CD8-positive, alpha-beta T cell (primary cell): ENCODE measurements at regions of chr9 and their contacts with region 1.

Region 1: GRCh38 chr9:96854073-96854876 is at the start of gene ZNF782:
- DNase-seq: peak; percentile 62 to 93 (median 83)
- ATAC-seq: peak; percentile 79
- H3K4me3 ChIP-seq: peak within 1 kb of the TSS; percentile 91 to 97
- H3K4me3 Mint-ChIP-seq: peak within 1 kb of the TSS; percentile 100
- H3K27ac ChIP-seq: peak within 1 kb of the TSS; percentile 52 to 74
- H3K27ac Mint-ChIP-seq: peak within 1 kb of the TSS; percentile 99
- H3K4me1 ChIP-seq: peaks cover 29% of the 10 kb centered on the region
- H3K4me1 Mint-ChIP-seq: peaks cover 52% of the 10 kb centered on the region
- H3K27me3 ChIP-seq: no peaks in the 10 kb centered on the region
- H3K27me3 Mint-ChIP-seq: peaks cover 4% of the 10 kb centered on the region
- CTCF ChIP-seq: no peak
- total RNA-seq, gene ZNF782: 2.6 to 3.6 TPM

Region 2: GRCh38 chr9:96566498-96567207 is 287.6 kb before region 1 on chr9:
- CTCF ChIA-PET with region 1: no interaction called
- POLR2A ChIA-PET with region 1: no interaction called
- intact Hi-C with region 1: loop called in 1 of 2 experiments (anchors 10 kb)
- DNase-seq: peak; percentile 57 to 92 (median 82)
- ATAC-seq: peak; percentile 86
- H3K4me3 ChIP-seq: peak overlapping the region; percentile 76 to 88
- H3K4me3 Mint-ChIP-seq: peak overlapping the region; percentile 86
- H3K27ac ChIP-seq: peak overlapping the region; percentile 87 to 91
- H3K27ac Mint-ChIP-seq: peak overlapping the region; percentile 84
- H3K4me1 ChIP-seq: peaks cover 24% of the 10 kb centered on the region
- H3K4me1 Mint-ChIP-seq: peaks cover 27% of the 10 kb centered on the region
- H3K27me3 ChIP-seq: no peaks in the 10 kb centered on the region
- H3K27me3 Mint-ChIP-seq: peaks cover 12% of the 10 kb centered on the region
- CTCF ChIP-seq: peak; percentile 58

Region 3: GRCh38 chr9:96844040-96844439 is 10.2 kb before region 1 on chr9:
- CTCF ChIA-PET with region 1: interaction called, 13 read pairs
- POLR2A ChIA-PET with region 1: interaction called, 3 read pairs
- intact Hi-C with region 1: no loop called
- DNase-seq: no peak
- ATAC-seq: no peak
- H3K4me3 ChIP-seq: no peak overlapping the region
- H3K4me3 Mint-ChIP-seq: no peak overlapping the region
- H3K27ac ChIP-seq: no peak overlapping the region
- H3K27ac Mint-ChIP-seq: no peak overlapping the region
- H3K4me1 ChIP-seq: peaks cover 4% of the 10 kb centered on the region
- H3K4me1 Mint-ChIP-seq: peaks cover 33% of the 10 kb centered on the region
- H3K27me3 ChIP-seq: no peaks in the 10 kb centered on the region
- H3K27me3 Mint-ChIP-seq: no peaks in the 10 kb centered on the region
- CTCF ChIP-seq: no peak

Region 4: DNA sequence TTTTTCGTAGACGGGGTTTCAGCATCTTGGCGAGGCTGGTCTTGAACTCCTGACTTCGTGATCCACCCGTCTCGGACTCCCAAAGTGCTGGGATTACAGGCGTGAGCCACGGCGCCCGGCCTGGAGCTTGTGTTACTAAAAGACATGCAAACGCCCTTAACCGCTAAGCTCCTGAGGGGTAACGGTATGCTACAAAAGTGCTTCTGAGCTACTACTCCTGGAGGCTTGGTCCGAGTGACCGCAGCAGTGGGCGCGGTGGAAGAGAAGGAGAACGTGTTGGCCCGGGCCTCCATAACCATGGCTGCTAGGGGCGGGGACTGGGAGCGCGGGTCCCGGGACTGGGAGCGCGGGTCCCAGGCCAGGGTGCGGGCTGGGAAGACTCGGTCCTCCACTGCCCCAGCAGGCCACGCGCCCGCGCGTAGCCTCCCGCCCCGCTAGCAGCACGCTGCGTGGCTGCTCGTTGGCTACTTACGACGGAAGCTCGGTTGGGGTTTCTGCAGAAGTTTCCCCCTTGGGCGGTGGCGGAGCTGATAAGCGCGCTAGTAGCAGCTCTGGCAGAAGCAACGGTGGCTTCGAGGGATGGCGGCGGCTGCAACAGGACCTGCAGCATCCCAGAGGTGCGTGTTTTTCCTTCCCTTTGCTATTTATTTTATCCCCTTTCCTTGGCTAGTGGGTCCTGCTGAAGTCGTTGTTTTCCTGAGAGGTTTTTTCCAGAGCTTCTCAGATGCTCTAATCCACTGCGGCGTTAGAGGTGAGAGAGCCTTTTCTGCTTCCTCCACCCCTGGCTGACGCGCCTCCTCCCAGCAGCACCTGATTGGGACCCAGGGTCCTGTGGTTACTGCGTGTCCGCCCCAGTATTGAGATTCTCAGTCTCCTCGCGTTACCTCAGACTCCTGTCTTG is 383.9 kb after region 1 on chr9:
- CTCF ChIA-PET with region 1: no interaction called
- POLR2A ChIA-PET with region 1: interaction called, 4 read pairs
- intact Hi-C with region 1: loop called (anchors 2 kb)
- DNase-seq: peak; percentile 48 to 89 (median 77)
- ATAC-seq: peak; percentile 91
- H3K4me3 ChIP-seq: peak overlapping the region; percentile 59 to 89
- H3K4me3 Mint-ChIP-seq: peak overlapping the region; percentile 93
- H3K27ac ChIP-seq: peak overlapping the region; percentile 45 to 51
- H3K27ac Mint-ChIP-seq: peak overlapping the region; percentile 95
- H3K4me1 ChIP-seq: peaks cover 14% of the 10 kb centered on the region
- H3K4me1 Mint-ChIP-seq: peaks cover 32% of the 10 kb centered on the region
- H3K27me3 ChIP-seq: no peaks in the 10 kb centered on the region
- H3K27me3 Mint-ChIP-seq: no peaks in the 10 kb centered on the region
- CTCF ChIP-seq: no peak

Region 5: DNA sequence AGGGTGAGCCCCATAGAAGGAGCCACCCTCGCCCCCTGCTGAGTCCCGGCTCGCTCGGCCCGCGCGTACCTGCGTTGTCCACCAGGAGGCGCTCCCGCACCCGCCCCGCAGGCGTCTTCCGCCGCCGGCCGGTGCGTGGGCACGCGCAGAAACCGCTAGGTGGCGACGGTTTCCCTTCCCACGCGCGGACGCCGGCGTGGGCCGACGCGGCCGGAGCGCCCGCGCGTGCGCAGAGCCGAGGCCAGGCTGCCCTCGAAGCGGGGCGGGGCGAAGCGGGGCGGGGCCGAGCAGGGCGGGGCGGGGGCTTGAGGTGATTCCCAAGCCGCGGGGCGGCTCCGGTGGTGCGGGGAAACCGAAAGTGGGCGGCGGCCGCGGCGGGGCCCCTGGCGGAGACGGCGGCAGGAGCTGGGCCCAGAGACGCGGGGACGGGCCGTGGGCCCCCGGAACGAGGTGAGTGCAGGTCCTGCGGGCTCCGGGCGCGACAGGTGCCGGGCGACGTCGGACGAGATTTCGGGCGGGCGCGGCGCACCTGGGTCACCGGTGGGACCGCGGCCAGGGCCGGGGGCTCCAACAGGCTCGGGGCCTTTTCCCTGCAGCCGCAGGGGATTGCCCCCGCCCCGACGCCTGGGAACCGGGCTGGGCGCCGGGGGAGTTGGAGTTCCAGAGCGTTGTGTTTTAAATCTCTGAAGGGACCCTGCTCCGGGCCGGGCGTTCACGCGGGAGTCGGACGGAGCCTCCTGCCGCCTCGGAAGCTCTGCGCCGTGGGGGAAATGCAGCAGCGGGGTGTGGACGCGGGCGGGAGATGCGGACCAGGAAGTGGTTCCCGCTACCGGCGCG is 557.7 kb after region 1 on chr9 and contains the start of gene TDRD7:
- CTCF ChIA-PET with region 1: interaction called, 6 read pairs
- POLR2A ChIA-PET with region 1: no interaction called
- intact Hi-C with region 1: loop called in 1 of 2 experiments (anchors 1 kb)
- DNase-seq: peak; percentile 86 to 97 (median 92)
- ATAC-seq: peak; percentile 88
- H3K4me3 ChIP-seq: peak within 1 kb of the TSS; percentile 62 to 77
- H3K4me3 Mint-ChIP-seq: peak within 1 kb of the TSS; percentile 86
- H3K27ac ChIP-seq: peak within 1 kb of the TSS; percentile 56 to 79
- H3K27ac Mint-ChIP-seq: peak within 1 kb of the TSS; percentile 85
- H3K4me1 ChIP-seq: peaks cover 13% of the 10 kb centered on the region
- H3K4me1 Mint-ChIP-seq: peaks cover 27% of the 10 kb centered on the region
- H3K27me3 ChIP-seq: no peaks in the 10 kb centered on the region
- H3K27me3 Mint-ChIP-seq: peaks cover 14% of the 10 kb centered on the region
- CTCF ChIP-seq: peak; percentile 96
- total RNA-seq, gene TDRD7: 3.5 to 4.5 TPM

Region 6: GRCh38 chr9:97632985-97633858 is 778.9 kb after region 1 on chr9 and contains the starts of genes NCBP1 and TSTD2:
- CTCF ChIA-PET with region 1: interaction called, 3 read pairs
- POLR2A ChIA-PET with region 1: interaction called, 5 read pairs
- intact Hi-C with region 1: loop called in 1 of 2 experiments (anchors 2 kb)
- DNase-seq: peak; percentile 89 to 98 (median 95)
- ATAC-seq: peak; percentile 86
- H3K4me3 ChIP-seq: peak within 1 kb of the TSS; percentile 96 to 97
- H3K4me3 Mint-ChIP-seq: peak within 1 kb of the TSS; percentile 96
- H3K27ac ChIP-seq: peak within 1 kb of the TSS; percentile 88 to 97
- H3K27ac Mint-ChIP-seq: peak within 1 kb of the TSS; percentile 99
- H3K4me1 ChIP-seq: peaks cover 45% of the 10 kb centered on the region
- H3K4me1 Mint-ChIP-seq: peaks cover 57% of the 10 kb centered on the region
- H3K27me3 ChIP-seq: no peaks in the 10 kb centered on the region
- H3K27me3 Mint-ChIP-seq: no peaks in the 10 kb centered on the region
- CTCF ChIP-seq: no peak
- total RNA-seq, gene NCBP1: 50.7 to 58.5 TPM
- total RNA-seq, gene TSTD2: 34.3 to 40.8 TPM